H1 (cell line): ENCODE measurements at regions of chr20 and their contacts with region 1.

Region 1: DNA sequence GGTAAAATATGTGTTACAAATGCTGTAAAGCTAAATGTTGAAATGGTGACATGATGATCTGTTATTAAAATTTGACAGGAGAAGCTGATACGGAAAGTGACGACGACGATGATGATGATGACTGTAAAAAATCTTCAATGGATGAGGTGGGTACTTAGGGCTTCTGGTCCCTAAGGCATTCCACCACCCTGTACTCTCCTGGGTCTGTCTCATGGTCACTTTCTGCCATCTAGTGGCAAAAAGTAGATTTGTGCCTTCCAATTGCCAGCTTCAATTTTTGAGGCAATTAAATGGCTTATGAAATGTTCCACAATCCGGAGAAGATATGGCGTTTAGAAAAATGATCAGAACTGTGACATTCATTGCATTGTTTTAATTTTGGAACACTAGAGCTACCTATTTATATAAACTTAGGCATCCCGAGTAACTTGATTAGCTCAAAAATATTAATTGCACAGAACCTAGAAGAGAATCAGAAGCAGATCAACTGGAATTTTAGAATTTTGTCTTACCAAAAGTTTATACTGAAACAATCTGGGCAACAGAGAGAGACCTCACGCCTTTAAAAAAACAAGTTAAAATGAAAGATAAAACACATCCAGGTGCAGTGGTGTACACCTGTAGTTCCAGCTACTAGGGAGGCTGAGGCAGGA is 346.5 kb upstream of the PLCB4 start:
- DNase-seq: no peak
- H3K4me3 ChIP-seq: no peak overlapping the region
- H3K27ac ChIP-seq: no peak overlapping the region
- H3K4me1 ChIP-seq: no peaks in the 10 kb centered on the region
- H3K27me3 ChIP-seq: no peaks in the 10 kb centered on the region
- CTCF ChIP-seq: peak; percentile 14 to 78 (median 75)
- EP300 ChIP-seq: no peak
- POLR2A ChIP-seq: no peak
- RAD21 ChIP-seq: peak; percentile 93 to 95

Region 2: GRCh38 chr20:7935027-7935551 is 787.3 kb before region 1 on chr20:
- CTCF ChIA-PET with region 1: interaction called, 40 read pairs
- POLR2A ChIA-PET with region 1: no interaction called
- DNase-seq: no peak
- H3K4me3 ChIP-seq: no peak overlapping the region
- H3K27ac ChIP-seq: no peak overlapping the region
- H3K4me1 ChIP-seq: no peaks in the 10 kb centered on the region
- H3K27me3 ChIP-seq: no peaks in the 10 kb centered on the region
- CTCF ChIP-seq: no peak
- EP300 ChIP-seq: no peak
- POLR2A ChIP-seq: no peak
- RAD21 ChIP-seq: no peak

Region 3: GRCh38 chr20:8131598-8132483 is 590.6 kb before region 1 on chr20 and contains the start of gene PLCB1:
- CTCF ChIA-PET with region 1: interaction called, 31 read pairs
- POLR2A ChIA-PET with region 1: no interaction called
- DNase-seq: peak; percentile 69 to 91
- H3K4me3 ChIP-seq: peak within 1 kb of the TSS; percentile 35 to 77 (median 54)
- H3K27ac ChIP-seq: no peak within 1 kb of the TSS
- H3K4me1 ChIP-seq: peaks cover 0 to 6% (median 2%) of the 10 kb centered on the region in 4 experiments; a peak in 2 of 7 replicates
- H3K27me3 ChIP-seq: peaks cover 8 to 28% (median 19%) of the 10 kb centered on the region in 4 experiments
- CTCF ChIP-seq: peak; percentile 87 to 97 (median 89)
- EP300 ChIP-seq: no peak
- POLR2A ChIP-seq: no peak
- RAD21 ChIP-seq: peak; percentile 92
- total RNA-seq, gene PLCB1: 8.6 and 9.1 TPM in 2 replicates

Region 4: DNA sequence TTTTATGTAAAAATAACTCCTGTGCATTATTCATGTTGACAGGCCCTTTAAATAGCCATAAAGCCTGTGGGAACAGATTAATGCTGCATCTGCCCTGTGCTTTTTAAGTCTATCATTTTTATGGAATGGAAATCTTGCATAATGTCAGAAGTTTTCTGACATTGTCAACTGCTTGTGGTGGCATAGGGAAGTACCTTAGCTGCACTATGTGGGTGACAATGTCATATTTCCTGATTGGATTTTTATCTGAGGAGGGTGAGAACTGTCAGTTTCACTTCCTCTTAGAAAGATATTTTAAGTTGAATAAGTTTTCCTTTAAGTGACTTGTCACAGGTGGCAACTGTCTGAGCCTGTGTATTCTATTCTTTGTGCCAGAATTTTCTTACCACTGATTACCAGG is 322.5 kb before region 1 on chr20:
- CTCF ChIA-PET with region 1: interaction called, 15 read pairs
- POLR2A ChIA-PET with region 1: no interaction called
- DNase-seq: no peak
- H3K4me3 ChIP-seq: no peak overlapping the region
- H3K27ac ChIP-seq: no peak overlapping the region
- H3K4me1 ChIP-seq: no peaks in the 10 kb centered on the region
- H3K27me3 ChIP-seq: peaks cover 0 to 1% (median 0%) of the 10 kb centered on the region in 4 experiments; a peak in 1 of 7 replicates
- CTCF ChIP-seq: no peak
- EP300 ChIP-seq: no peak
- POLR2A ChIP-seq: no peak
- RAD21 ChIP-seq: no peak

Region 5: GRCh38 chr20:8535403-8536261 is 186.8 kb before region 1 on chr20:
- CTCF ChIA-PET with region 1: interaction called, 23 read pairs
- POLR2A ChIA-PET with region 1: no interaction called
- DNase-seq: no peak
- H3K4me3 ChIP-seq: no peak overlapping the region
- H3K27ac ChIP-seq: no peak overlapping the region
- H3K4me1 ChIP-seq: peaks cover 0 to 3% (median 0%) of the 10 kb centered on the region in 4 experiments; a peak in 1 of 7 replicates
- H3K27me3 ChIP-seq: no peaks in the 10 kb centered on the region
- CTCF ChIP-seq: peak; percentile 36 to 61 (median 61)
- EP300 ChIP-seq: no peak
- POLR2A ChIP-seq: no peak
- RAD21 ChIP-seq: peak; percentile 32 to 53; a peak in 3 of 4 replicates

Region 6: DNA sequence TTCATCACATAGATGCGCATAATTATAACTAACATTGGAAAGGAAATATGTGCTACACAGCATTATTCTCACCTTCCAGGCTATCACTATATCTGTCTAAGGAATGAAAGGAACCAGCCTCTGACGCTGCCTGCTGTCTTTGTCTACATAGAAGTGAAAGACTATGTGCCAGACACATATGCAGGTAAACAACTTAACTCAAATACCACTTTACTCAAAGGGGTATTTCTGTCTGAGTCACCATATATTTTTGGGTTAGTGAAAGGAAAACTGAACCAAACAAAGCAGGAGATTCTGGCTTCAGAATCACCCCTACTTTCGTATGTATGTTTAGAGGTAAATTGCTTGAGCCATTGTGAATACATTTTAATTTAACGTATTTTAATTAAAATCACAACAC is 17.9 kb after region 1 on chr20:
- CTCF ChIA-PET with region 1: interaction called, 14 read pairs
- POLR2A ChIA-PET with region 1: no interaction called
- DNase-seq: no peak
- H3K4me3 ChIP-seq: no peak overlapping the region
- H3K27ac ChIP-seq: no peak overlapping the region
- H3K4me1 ChIP-seq: no peaks in the 10 kb centered on the region
- H3K27me3 ChIP-seq: no peaks in the 10 kb centered on the region
- CTCF ChIP-seq: no peak
- EP300 ChIP-seq: no peak
- POLR2A ChIP-seq: no peak
- RAD21 ChIP-seq: no peak

Region 7: DNA sequence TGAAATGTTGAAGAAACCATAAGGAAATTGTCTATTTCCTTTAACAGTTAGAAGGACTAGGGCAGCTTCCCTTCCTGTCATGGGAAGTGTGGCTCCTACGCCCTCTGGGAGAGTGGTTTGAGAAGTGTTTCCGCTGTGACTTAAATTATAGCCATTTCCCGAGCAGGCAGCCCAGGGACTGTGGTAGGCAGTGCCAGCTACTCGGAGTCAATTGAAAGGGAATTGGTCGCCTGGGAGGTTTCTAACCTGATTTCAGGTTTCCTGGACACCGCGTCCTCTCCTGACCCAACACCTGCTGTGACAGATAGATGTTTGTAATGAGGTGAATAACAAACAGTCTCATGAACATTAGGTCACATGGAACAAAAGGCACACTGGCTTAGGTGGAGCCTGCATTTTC is 90.4 kb after region 1 on chr20:
- CTCF ChIA-PET with region 1: no interaction called
- POLR2A ChIA-PET with region 1: no interaction called
- DNase-seq: peak; percentile 21 to 53
- H3K4me3 ChIP-seq: no peak overlapping the region
- H3K27ac ChIP-seq: no peak overlapping the region
- H3K4me1 ChIP-seq: peaks cover 3 to 25% (median 22%) of the 10 kb centered on the region in 4 experiments
- H3K27me3 ChIP-seq: no peaks in the 10 kb centered on the region
- CTCF ChIP-seq: no peak
- EP300 ChIP-seq: no peak
- POLR2A ChIP-seq: no peak
- RAD21 ChIP-seq: no peak